A549 (cell line): ENCODE measurements at regions of chr9 and their contacts with region 1.

Region 1: GRCh38 chr9:125746017-125746773 is 978 bp upstream of the PBX3 start:
- DNase-seq: peak; percentile 94 to 97
- ATAC-seq: peak; percentile 86 to 98
- H3K4me3 ChIP-seq: peak overlapping the region; percentile 74
- H3K27ac ChIP-seq: peak overlapping the region; percentile 87 to 97
- H3K4me1 ChIP-seq: peaks cover 10% of the 10 kb centered on the region; the same call in 1 of the 3 replicates
- CTCF ChIP-seq: no peak
- EP300 ChIP-seq: no peak
- POLR2A ChIP-seq: peak; percentile 58
- RAD21 ChIP-seq: no peak

Region 2: DNA sequence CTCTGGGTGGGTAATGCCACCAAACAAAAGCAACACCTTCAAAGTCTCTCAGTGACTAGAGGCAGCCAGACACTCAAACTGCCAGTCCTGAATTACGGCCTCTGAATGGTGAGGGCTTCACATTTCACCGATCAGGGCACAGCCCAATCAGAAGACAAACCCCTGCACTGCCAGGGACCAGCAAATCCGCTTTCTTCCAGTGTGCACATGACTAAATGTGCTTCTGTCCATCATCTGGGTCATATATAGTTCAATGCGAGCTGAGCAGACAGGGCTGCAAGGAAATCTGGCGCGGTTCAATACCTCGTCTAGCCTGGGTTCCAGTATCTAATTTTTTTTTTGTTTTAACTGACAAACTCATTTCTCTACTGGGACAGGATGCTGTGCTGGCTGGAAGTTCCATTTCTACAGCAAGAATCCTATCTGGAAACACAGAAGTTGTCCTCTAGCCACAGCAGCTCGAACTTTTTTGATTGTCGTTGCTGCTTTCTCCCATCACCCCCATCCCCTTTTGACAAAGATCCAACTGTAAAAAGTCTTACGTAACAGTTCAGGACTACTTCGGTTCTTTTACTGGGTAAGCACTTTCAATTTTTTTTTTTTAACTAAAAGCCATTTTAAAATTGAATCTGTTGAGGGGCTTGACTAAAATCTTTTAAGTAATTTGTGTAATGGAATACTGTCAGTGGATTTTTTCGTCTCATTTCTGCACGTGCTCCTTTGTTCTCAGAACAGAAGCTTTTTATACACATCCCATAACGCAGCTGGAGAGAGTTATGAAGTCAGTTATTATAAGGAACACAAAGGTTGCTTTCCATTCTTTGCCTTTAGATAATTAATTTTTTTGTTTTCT is 1087.8 kb before region 1 on chr9:
- CTCF ChIA-PET with region 1: no interaction called
- POLR2A ChIA-PET with region 1: no interaction called
- DNase-seq: peak; percentile 95 to 97
- ATAC-seq: peak; percentile 95 to 96
- H3K4me3 ChIP-seq: peak overlapping the region; percentile 68
- H3K27ac ChIP-seq: peak overlapping the region; percentile 86 to 88
- H3K4me1 ChIP-seq: peaks cover 35% of the 10 kb centered on the region
- CTCF ChIP-seq: no peak
- EP300 ChIP-seq: no peak
- POLR2A ChIP-seq: peak; percentile 77
- RAD21 ChIP-seq: no peak

Region 3: DNA sequence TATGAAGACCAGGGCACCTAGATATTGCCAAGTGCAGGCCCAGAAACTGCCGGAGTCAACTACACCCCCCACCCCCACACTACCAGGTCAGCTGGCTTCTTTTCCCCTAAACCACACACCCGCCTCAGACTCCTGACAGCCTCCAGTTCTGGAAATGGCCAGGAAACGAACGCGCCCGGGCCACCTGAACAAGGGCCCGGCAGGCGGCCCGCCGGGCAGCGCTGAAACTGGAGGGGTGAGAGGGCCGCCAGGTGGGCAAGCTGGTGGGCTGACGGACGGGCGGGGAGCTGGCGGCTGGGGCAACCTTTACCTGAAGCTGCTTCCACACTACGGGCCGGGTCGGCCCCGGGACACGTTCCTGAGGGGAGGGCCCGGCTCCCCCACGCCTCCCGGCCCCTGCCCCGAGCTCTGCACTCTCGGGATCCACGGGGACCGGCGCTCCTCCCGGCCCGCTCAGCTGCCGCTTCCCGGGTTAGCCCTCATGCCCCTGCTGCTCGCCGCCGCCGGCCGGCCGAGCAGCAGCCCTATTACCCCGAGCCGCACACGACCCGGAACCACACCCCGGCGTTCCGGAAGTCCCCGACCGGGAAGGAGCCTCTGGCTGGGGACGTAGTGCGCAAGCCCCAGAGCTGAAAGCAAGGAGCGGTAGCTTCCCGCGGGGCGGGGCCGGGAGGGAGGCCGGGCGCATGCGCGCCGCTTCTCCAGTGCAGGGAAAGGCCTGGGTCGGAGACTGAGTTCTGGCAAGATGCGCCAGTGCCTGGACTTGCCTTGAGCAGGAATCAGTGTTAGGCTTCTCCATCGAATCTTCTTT is 39.3 kb before region 1 on chr9 and contains the start of gene MAPKAP1:
- CTCF ChIA-PET with region 1: interaction called, 4 read pairs
- POLR2A ChIA-PET with region 1: interaction called, 17 read pairs
- DNase-seq: peak; percentile 93 to 95
- ATAC-seq: peak; percentile 100
- H3K4me3 ChIP-seq: peak within 1 kb of the TSS; percentile 79
- H3K27ac ChIP-seq: peak within 1 kb of the TSS; percentile 92 to 93
- H3K4me1 ChIP-seq: peaks cover 17% of the 10 kb centered on the region
- CTCF ChIP-seq: no peak
- EP300 ChIP-seq: no peak
- POLR2A ChIP-seq: peak; percentile 78
- RAD21 ChIP-seq: no peak
- polyA plus RNA-seq, gene MAPKAP1: 119 and 130 TPM in 2 replicates